Activated CD4-positive, alpha-beta memory T cell treated with anti-CD3 and anti-CD28 coated beads for 36 hours (primary cell): ENCODE measurements at regions of chrX and their contacts with region 1.

Region 1: DNA sequence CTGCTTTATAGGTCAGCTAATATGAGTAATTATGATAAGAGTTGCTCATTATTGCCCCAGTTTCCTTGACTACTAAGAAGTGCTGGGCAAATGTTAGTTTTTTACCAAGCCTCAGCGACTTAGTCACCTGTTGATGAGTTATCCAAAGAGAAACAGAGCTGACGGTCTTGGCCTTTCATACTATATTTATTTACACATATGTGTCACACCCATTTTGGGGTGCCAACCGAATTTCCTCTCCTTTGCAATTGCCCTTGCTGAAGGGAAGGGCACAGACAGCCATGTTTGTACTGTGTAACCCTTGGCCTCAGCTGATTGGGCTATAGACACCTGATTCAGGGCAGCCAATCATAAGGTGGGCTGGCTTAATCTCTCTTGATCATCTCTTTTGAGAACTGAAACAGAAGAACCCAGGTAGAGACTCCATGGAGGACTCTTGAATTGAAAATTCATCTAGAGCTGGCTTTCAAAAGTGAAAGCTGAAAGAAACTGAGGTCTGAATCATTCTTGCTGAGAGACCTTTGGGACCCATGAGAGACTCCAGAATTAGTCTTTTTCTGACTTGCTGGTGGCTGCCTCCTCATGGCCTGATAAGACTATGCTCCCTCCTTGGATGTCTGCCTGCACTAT is 111.7 kb upstream of the RPS6KA3 start:
- DNase-seq: peak; percentile 62
- H3K4me3 Mint-ChIP-seq: no peak overlapping the region
- H3K27ac Mint-ChIP-seq: peak overlapping the region; percentile 91
- H3K4me1 Mint-ChIP-seq: peaks cover 32% of the 10 kb centered on the region
- H3K27me3 Mint-ChIP-seq: no peaks in the 10 kb centered on the region

Region 2: DNA sequence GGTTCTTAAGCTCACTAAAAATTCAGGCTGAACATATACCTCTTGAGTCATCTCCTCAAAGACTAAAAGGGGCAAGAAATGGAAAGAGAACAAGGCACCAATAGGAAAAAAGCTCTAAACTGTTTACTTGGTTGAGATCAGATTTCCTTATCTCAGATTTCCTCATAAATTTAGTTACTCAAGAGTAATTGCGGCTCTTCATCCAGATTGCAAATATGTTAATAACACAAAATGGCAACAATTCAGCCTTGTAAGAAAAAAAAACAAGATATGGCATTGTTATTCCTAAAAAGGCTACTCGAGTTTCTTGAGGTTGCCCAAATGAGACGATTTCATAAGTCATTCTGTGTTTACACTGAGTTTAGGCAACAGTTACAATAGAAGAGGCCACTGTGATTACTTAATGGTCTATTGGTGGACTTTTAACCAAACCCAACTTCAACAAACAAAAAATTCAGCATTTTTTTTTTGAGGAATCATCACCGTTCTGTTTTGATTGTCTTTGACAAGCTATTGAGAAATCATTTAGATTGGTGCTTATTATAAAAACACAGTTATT is 1132.6 kb before region 1 on chrX:
- CTCF ChIA-PET with region 1: no interaction called
- POLR2A ChIA-PET with region 1: no interaction called
- intact Hi-C with region 1: no loop called
- DNase-seq: no peak
- H3K4me3 Mint-ChIP-seq: no peak overlapping the region
- H3K27ac Mint-ChIP-seq: no peak overlapping the region
- H3K4me1 Mint-ChIP-seq: no peaks in the 10 kb centered on the region
- H3K27me3 Mint-ChIP-seq: peaks cover 2% of the 10 kb centered on the region

Region 3: DNA sequence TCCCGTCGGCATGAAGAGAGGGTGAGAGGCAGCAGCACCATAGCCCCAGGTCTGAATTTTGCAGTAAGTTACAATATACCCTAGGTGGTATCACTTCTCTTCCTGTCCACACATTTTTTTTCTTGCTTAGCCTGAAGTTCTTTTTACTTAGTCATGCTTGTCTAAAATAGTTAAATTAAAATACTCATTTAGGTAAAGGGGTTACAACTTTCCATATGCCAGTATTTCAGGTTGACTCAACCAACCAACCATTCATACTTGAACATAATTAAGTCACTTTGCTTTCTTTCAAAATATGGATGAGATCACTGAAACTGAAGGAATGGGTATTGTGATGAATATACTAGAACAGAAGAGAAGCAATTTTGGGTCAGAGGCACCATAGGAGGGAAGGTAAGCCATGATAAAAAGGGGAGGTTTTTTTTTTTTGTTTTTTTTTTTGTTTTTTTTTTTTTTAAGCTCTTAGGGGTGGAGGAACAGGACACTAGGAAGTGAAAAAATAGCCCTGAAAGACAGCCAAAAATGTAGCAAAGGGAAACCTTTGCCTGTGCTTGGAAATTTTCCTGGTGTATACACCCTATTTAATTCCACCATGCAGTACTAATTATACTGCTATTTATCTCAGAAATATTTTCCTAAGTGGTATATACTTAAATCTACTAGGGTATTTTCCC is 153.5 kb before region 1 on chrX:
- CTCF ChIA-PET with region 1: no interaction called
- POLR2A ChIA-PET with region 1: no interaction called
- intact Hi-C with region 1: loop called (anchors 1 kb)
- DNase-seq: peak; percentile 22
- H3K4me3 Mint-ChIP-seq: no peak overlapping the region
- H3K27ac Mint-ChIP-seq: peak overlapping the region; percentile 55
- H3K4me1 Mint-ChIP-seq: peaks cover 53% of the 10 kb centered on the region
- H3K27me3 Mint-ChIP-seq: no peaks in the 10 kb centered on the region

Region 4: GRCh38 chrX:20266810-20267606 is 111.4 kb before region 1 on chrX and contains the start of gene RPS6KA3:
- CTCF ChIA-PET with region 1: no interaction called
- POLR2A ChIA-PET with region 1: interaction called, 3 read pairs
- intact Hi-C with region 1: loop called (anchors 1 kb)
- DNase-seq: peak; percentile 93
- H3K4me3 Mint-ChIP-seq: peak within 1 kb of the TSS; percentile 95
- H3K27ac Mint-ChIP-seq: peak within 1 kb of the TSS; percentile 99
- H3K4me1 Mint-ChIP-seq: peaks cover 18% of the 10 kb centered on the region
- H3K27me3 Mint-ChIP-seq: no peaks in the 10 kb centered on the region
- total RNA-seq, gene RPS6KA3: 51.8 to 52.0 TPM

Region 5: GRCh38 chrX:20412871-20413486 is 34.6 kb after region 1 on chrX:
- CTCF ChIA-PET with region 1: no interaction called
- POLR2A ChIA-PET with region 1: interaction called, 3 read pairs
- intact Hi-C with region 1: loop called (anchors 2 kb)
- DNase-seq: peak; percentile 63
- H3K4me3 Mint-ChIP-seq: peak overlapping the region; percentile 45
- H3K27ac Mint-ChIP-seq: peak overlapping the region; percentile 75
- H3K4me1 Mint-ChIP-seq: peaks cover 25% of the 10 kb centered on the region
- H3K27me3 Mint-ChIP-seq: no peaks in the 10 kb centered on the region

Region 6: GRCh38 chrX:20500171-20500865 is 121.9 kb after region 1 on chrX:
- CTCF ChIA-PET with region 1: no interaction called
- POLR2A ChIA-PET with region 1: no interaction called
- intact Hi-C with region 1: loop called (anchors 1 kb)
- DNase-seq: peak; percentile 43
- H3K4me3 Mint-ChIP-seq: no peak overlapping the region
- H3K27ac Mint-ChIP-seq: no peak overlapping the region
- H3K4me1 Mint-ChIP-seq: peaks cover 14% of the 10 kb centered on the region
- H3K27me3 Mint-ChIP-seq: peaks cover 6% of the 10 kb centered on the region